HEK293 (cell line): ENCODE measurements at regions of chr1 and their contacts with region 1.

Region 1: GRCh38 chr1:202122639-202123335 is at the start of gene GPR37L1:
- H3K4me3 ChIP-seq: no peak within 1 kb of the TSS
- H3K27ac ChIP-seq: no peak within 1 kb of the TSS
- H3K4me1 ChIP-seq: no peaks in the 10 kb centered on the region
- CTCF ChIP-seq: peak; percentile 24; the same call in 1 of the 2 replicates

Region 2: DNA sequence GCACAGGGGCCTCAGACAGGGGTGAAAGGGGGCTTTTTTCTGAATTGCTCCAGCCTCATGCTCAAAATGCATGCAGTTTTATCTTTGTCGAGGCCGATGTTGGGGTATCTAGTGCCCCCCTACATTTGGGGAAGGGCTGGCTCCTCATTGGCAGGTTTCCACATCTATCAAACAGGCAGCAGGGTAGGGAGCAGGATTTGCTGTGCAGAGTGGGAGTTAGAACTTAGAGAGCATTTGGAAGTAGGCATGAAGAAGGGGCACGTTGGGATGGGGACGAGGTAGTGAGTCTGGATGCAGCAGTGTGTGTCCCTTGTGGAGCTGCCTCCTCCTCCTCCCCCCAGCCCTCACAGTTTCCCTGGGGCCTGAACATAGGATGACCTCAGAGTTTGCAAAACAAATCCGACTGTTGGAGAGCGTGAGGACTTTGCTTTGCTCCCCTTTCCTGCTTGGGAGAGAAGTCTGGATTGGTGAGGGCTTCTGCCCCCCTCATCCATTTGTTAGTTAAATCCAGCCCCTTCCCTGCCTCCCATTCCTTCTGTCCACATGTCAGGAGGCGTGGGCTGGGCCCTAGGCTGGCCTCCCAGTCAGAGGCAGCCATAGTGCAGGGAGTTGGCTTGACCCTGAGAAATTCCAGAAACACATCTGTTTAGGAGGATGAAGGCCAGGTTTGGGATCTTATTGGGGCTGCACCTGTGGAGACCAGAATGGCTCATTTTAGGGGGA is 36.9 kb before region 1 on chr1:
- CTCF ChIA-PET with region 1: no interaction called
- POLR2A ChIA-PET with region 1: no interaction called
- H3K4me3 ChIP-seq: no peak overlapping the region
- H3K27ac ChIP-seq: no peak overlapping the region
- H3K4me1 ChIP-seq: no peaks in the 10 kb centered on the region; the same call in 1 of the 2 replicates
- CTCF ChIP-seq: no peak

Region 3: DNA sequence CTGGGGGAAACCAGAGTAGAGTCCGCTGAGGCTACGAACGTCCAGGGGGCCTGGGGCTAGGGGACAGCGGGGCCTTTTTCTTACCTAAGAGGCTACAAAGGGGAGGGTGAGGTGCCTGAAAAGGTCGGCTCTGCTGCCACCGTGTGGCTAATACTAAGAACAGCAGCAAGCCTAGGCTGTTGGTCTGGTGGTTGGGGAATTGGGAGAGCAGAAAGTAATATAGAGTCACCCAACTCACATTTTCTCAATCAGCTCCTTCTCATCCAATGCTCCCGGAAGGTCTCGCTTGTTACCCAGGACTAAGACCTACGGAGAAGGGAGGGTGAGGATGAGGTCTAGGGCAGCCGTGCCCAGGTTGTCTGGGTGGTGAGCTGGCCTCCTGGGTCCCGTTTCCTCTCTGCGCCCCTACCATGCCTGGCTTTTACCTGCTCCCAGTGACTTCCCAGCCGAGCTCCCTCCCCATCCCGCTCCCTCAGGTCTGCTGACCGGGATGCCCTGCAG is 12.5 kb after region 1 on chr1:
- CTCF ChIA-PET with region 1: interaction called, 53 read pairs
- POLR2A ChIA-PET with region 1: no interaction called
- H3K4me3 ChIP-seq: no peak overlapping the region
- H3K27ac ChIP-seq: no peak overlapping the region
- H3K4me1 ChIP-seq: no peaks in the 10 kb centered on the region
- CTCF ChIP-seq: 0 out of 2 replicates have a peak, but pooled peaks have one; percentile 39